Panc1 (cell line): ENCODE measurements at regions of chr11 and their contacts with region 1.

Region 1: DNA sequence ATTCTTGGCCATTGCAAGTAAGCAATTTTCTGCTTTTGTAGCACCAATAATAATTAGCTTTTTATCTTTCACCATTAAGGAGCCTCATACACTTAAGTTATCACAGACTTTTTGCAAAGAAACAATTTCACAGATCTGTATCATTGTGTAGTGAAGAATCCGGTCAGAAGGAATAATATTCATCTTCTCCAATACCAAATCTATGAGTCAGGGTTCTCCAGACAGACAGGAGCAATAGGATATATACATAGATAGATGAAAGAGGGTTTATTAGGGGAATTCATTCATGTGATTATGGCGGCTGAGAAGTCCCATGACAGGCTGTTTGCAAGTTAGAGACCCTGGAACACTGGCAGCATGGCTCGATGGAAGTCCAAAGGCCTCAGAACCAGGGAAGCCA is 82.9 kb upstream of the UBASH3B start:
- DNase-seq: no peak
- ATAC-seq: no peak
- H3K4me3 ChIP-seq: no peak overlapping the region
- H3K27ac ChIP-seq: no peak overlapping the region
- H3K4me1 ChIP-seq: no peaks in the 10 kb centered on the region
- H3K27me3 ChIP-seq: peaks cover 3% of the 10 kb centered on the region; the same call in 1 of the 2 replicates
- CTCF ChIP-seq: no peak

Region 2: DNA sequence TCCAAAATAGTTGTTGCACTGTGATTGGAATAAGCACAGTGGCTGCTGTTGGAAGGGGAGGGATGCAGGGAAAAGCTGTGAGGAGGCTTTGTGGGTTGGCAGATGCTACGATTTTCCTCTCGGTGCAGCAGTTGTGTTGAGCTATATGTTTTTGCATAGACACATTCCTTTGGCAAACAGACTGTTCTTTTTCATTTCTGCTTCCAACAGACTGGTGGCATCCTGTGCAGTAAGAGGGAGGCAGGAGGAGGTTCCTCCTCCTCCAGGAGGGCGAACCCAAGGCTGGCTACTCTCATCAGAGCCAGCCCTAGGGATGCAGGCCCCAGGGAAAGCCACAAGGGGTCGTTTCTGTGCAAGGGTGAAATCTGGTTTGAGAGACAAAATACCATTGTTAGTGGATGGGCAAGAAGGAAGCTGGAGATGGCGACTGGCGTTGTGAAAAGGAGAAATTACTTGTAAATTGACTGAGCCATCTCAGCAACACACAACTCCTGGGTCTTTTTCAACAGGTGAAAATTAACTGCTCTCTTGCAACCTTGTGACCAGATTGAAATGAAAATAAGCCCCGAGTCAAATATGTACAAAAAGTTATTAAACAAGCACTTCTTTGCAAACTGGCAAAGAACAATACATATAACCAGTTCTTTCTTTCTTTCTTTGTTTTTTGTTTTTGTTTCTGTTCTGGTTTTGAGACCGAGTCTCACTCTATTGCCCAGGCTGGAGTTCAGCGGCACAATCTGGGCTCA is 56.4 kb after region 1 on chr11:
- CTCF ChIA-PET with region 1: no interaction called
- POLR2A ChIA-PET with region 1: interaction called, 14 read pairs
- in situ Hi-C with region 1: no loop called
- intact Hi-C with region 1: no loop called
- DNase-seq: peak; percentile 60
- ATAC-seq: peak; percentile 88
- H3K4me3 ChIP-seq: no peak overlapping the region
- H3K27ac ChIP-seq: no peak overlapping the region
- H3K4me1 ChIP-seq: no peaks in the 10 kb centered on the region
- H3K27me3 ChIP-seq: no peaks in the 10 kb centered on the region
- CTCF ChIP-seq: peak; percentile 96

Region 3: DNA sequence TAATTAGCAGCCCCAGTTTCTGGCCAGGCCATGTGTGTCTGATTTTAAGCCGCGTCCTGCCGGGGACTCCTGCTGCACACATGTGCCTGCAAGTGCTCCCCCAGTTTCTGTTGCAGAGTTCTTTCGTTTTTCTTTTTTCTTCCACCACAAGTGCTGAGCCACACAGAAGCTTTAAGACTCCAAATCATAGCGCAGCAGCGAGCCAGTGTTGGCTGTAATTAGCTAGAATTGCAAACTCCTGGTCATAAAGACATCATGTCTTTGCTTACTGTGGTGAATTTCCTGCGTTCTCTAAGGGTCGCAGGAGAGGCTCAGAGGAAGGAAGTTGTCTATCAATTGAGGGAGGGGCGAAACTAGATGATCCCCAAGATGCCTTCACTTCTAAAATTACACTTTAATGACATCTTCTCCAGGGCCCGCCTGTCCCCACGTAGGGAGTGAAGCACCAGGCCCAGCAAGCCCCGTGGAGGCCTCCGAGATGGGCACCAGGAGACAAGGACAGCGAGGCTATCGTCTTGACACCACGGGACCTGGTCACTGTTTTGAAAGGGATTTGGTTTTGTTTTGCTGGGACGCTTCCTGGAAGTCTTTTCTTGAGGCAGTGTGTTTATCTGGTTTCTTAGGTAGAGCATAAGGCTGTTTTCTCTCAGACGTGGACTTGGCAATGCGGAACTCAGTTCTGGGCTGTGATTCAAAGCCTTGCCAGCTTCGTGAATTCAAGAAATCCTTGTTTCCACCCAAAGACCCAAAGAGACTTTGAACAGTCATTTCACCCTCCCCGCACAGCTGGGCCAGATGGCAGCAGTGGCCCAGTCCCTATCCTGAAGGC is 154.7 kb after region 1 on chr11:
- CTCF ChIA-PET with region 1: no interaction called
- POLR2A ChIA-PET with region 1: no interaction called
- in situ Hi-C with region 1: no loop called
- intact Hi-C with region 1: no loop called
- DNase-seq: no peak
- ATAC-seq: no peak
- H3K4me3 ChIP-seq: no peak overlapping the region
- H3K27ac ChIP-seq: no peak overlapping the region
- H3K4me1 ChIP-seq: peaks cover 4% of the 10 kb centered on the region; the same call in 1 of the 2 replicates
- H3K27me3 ChIP-seq: no peaks in the 10 kb centered on the region
- CTCF ChIP-seq: no peak